ENCODE measurements at regions of chr17 and their contacts with region 1.

Region 1: DNA sequence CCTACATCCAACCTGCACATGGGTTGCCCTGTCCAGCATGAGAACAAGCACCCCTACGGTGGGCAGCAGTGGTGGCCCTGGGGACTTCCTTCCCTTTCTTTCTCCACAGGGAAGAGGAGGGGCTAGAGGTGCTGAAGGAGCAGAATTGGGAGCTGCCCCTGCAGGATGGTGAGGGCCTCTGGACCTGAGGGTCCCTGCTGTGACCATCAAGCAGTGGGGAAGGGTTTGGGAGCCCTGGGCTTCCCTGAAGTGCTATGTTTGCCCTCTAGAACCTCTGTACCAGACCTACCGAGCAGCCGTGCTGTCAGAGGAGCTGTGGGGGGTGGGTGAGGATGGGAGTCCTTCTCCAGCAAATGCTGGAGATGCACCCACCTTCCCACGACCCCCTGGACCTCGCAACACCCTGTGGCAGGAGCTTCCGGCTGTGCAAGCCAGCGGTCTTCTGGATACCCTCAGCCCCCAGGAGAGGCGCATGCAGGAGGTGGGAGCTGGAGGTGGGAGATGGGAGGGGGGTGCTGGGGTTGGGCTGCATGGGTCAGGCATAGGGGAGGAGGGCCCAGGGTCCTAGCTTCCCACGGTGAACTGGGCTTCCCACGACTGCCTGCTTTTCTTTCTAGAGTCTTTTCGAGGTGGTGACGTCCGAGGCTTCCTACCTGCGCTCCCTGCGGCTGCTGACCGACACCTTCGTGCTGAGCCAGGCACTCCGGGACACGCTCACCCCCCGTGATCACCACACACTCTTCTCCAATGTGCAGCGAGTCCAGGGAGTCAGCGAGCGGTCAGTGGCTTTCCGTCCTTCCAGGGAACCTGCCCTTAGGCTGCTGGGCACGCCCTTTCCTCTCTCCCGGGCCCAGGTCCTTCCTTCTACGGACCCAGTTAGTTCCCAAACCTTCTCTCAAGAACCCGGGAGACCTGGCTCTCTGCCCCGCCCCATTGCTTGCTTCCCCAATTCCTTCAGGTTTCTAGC is 5.0 kb downstream of the ARHGEF15 start:
- DNase-seq: no peak
- ATAC-seq: no peak
- H3K4me3 ChIP-seq: peak overlapping the region in 6 of 10 donors; percentile 5 to 25 (median 15)
- H3K27ac ChIP-seq: peak overlapping the region in 3 of 10 donors; percentile 10 to 90 (median 15)
- H3K4me1 ChIP-seq: peaks cover 7 to 42% (median 19%) of the 10 kb centered on the region in 9 donors
- H3K27me3 ChIP-seq: peaks cover 0 to 60% (median 29%) of the 10 kb centered on the region in 7 donors
- CTCF ChIP-seq: no peak

Region 2: GRCh38 chr17:8204761-8205555 is 110.1 kb before region 1 on chr17:
- intact Hi-C with region 1: no loop called
- DNase-seq: no peak
- ATAC-seq: no peak
- H3K4me3 ChIP-seq: no peak overlapping the region
- H3K27ac ChIP-seq: no peak overlapping the region
- H3K4me1 ChIP-seq: peaks cover under 1 to 14% (median 3%) of the 10 kb centered on the region in 9 donors
- H3K27me3 ChIP-seq: no peaks in the 10 kb centered on the region
- CTCF ChIP-seq: no peak

Region 3: GRCh38 chr17:8359769-8360168 is 44.7 kb after region 1 on chr17:
- intact Hi-C with region 1: loop called in 4 of 10 experiments (anchors 2 to 10 kb)
- DNase-seq: peak in 1 of 2 donors; percentile 62
- ATAC-seq: peak; percentile 60 to 93 (median 88)
- H3K4me3 ChIP-seq: peak overlapping the region in 1 of 10 donors; percentile 0
- H3K27ac ChIP-seq: peak overlapping the region in 9 of 10 donors; percentile 67 to 91 (median 75)
- H3K4me1 ChIP-seq: peaks cover 0 to 57% (median 45%) of the 10 kb centered on the region in 9 donors
- H3K27me3 ChIP-seq: no peaks in the 10 kb centered on the region
- CTCF ChIP-seq: no peak

Region 4: DNA sequence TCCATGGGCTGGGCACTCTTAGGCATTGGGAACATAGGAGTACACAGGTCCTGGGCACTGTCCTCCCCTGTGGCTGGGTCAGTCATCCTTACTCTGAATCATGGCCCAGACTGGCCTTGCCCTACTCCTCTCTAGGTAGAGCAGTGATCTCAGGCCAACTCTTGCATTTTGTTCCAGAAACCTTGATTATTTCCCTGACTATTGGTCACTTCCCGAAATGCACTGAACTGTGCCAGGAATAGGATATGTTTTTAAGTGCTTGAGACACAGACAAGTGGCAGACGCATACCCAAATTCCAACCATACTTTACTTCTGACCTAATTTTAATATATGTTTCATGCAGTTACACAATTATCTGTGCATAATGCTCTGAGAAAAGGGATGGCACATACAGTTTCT is 51.2 kb after region 1 on chr17:
- intact Hi-C with region 1: loop called in 4 of 10 experiments (anchors 2 to 10 kb)
- DNase-seq: no peak
- ATAC-seq: peak in 7 of 8 donors; percentile 44 to 83 (median 62)
- H3K4me3 ChIP-seq: no peak overlapping the region
- H3K27ac ChIP-seq: peak overlapping the region; percentile 29 to 88 (median 70)
- H3K4me1 ChIP-seq: peaks cover 7 to 66% (median 47%) of the 10 kb centered on the region in 9 donors
- H3K27me3 ChIP-seq: no peaks in the 10 kb centered on the region
- CTCF ChIP-seq: no peak

Region 5: GRCh38 chr17:8376271-8377067 is 61.4 kb after region 1 on chr17 and contains the start of gene KRABD2:
- intact Hi-C with region 1: loop called in 1 of 10 experiments (anchors 5 kb)
- DNase-seq: peak; percentile 92 to 95
- ATAC-seq: peak; percentile 95 to 98 (median 97)
- H3K4me3 ChIP-seq: peak within 1 kb of the TSS; percentile 47 to 89 (median 76)
- H3K27ac ChIP-seq: peak within 1 kb of the TSS; percentile 89 to 97 (median 94)
- H3K4me1 ChIP-seq: peaks cover 4 to 63% (median 46%) of the 10 kb centered on the region in 9 donors
- H3K27me3 ChIP-seq: no peaks in the 10 kb centered on the region
- CTCF ChIP-seq: peak; percentile 11 to 71 (median 62)

Region 6: DNA sequence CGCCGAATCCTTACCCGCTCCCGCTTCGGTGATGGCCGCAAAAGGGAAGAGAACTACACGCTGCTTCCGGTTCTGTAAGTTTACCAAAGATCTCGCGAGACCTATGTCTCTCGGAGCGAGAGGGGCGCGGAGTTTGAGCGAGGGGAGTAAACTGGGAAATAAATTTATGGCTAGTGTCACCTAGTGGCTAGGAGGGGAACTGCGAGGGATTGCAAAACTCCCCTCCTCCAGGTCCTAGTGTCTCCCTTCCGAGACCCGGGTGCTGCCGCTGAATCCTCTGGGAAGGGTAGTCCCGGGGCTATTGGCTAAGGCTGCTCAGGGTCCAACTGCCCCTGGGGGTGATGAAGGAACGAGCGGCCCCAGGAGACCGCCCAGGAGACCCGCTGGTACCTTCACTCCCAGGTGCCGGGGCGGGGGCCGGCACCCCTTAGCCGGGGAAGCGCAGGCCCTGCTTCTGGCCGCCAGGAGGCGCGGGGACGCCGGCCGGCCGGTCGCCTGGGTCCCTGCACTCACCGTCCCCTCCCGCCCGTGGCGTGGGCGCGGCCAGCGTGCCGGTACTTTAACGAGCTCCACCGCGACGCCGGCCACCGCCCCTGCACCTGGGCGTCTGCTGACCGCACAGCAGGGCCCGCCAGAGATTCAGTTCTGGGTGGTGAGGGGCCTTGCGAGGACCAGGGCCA is 68.2 kb after region 1 on chr17 and contains the start of gene RPL26:
- intact Hi-C with region 1: loop called in 2 of 10 experiments (anchors 2 to 5 kb)
- DNase-seq: peak; percentile 92 to 98
- ATAC-seq: peak; percentile 91 to 97 (median 94)
- H3K4me3 ChIP-seq: peak within 1 kb of the TSS; percentile 64 to 87 (median 77)
- H3K27ac ChIP-seq: peak within 1 kb of the TSS; percentile 46 to 90 (median 86)
- H3K4me1 ChIP-seq: peaks cover 6 to 47% (median 31%) of the 10 kb centered on the region in 9 donors
- H3K27me3 ChIP-seq: no peaks in the 10 kb centered on the region
- CTCF ChIP-seq: peak; percentile 95 to 100 (median 99)
- total RNA-seq, gene RPL26: 1,004 to 1,398 (median 1,028) TPM

Measured in heart right ventricle (tissue), 16 donors.